HCT116 (cell line): ENCODE measurements at regions of chr22 and their contacts with region 1.

Region 1: DNA sequence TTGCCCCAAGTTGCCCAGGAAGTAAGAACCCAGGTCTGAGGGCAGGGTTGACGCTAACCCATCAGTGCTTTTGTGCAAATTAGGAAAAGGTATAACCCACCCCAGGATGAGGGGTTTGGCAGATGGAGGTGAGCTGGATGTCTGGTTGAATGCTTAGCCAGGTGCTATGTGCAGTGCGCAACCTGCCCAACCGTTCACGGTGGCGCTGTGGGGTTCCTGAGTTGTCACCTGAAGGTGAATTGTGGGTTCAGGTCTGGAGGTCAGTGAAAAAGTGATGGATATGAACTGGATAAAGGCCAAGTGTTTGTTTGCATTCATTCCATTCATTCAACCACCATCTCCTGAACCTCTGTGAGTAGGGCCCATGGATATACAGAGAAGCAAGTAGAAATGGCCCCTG is 14.3 kb upstream of the LGALS2 start:
- DNase-seq: no peak
- ATAC-seq: peak; percentile 70
- H3K4me3 ChIP-seq: no peak overlapping the region
- H3K27ac ChIP-seq: no peak overlapping the region
- H3K4me1 ChIP-seq: peaks cover 4 to 22% of the 10 kb centered on the region in 2 experiments; a peak in 3 of 4 replicates
- H3K27me3 ChIP-seq: no peaks in the 10 kb centered on the region
- CTCF ChIP-seq: peak; percentile 35 to 68 (median 63); a peak in 5 of 6 replicates
- POLR2A ChIP-seq: no peak
- RAD21 ChIP-seq: peak; percentile 34; the same call in 1 of the 2 replicates

Region 2: DNA sequence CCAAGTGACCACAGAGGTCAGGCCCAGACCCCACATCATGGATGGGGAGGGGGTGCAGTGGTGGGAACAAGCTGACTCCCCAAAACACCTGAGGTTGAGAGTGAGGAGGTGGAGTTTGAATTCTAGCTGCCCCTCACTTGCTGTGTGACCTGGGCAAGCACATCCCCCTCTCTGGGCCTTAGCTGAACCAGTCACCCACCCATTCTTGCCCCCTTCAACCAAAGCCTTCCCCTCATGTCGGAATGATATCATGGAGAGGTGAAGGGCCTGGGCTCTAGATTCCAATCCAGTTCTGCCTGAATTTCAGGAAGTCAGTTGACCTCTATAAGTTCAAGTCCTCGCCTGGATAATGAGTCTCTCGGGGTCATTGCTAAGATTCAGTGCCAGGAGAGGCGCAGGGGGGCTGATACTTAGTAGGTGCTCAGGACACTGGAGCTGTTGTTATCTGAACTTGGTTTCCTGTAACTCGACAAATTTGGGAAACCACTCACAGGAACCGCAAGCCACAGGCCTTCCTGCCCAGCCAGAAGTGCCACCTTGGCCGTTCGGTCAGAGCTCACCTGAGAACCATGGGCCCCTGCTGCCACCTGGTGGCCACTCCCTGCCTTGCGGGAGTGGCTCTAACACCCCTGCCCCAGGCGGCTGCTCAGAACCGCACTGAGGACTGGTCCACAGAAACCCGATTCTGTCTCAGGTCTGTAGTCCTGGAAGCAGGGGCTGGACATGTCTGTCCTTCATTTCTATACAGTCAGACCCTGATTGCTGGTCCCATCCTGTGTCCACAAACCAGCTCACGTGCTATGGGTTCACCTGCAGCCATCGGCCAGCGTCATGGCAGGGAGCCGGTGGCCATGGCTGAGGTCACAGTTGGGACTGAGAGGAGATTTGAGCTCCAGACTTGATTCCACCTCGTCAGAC is 27.1 kb before region 1 on chr22:
- CTCF ChIA-PET with region 1: interaction called, 18 read pairs
- POLR2A ChIA-PET with region 1: interaction called, 9 read pairs
- RAD21 ChIA-PET with region 1: interaction called in 1 of 2 experiments, 4 read pairs
- intact Hi-C with region 1: no loop called
- DNase-seq: peak; percentile 84
- ATAC-seq: peak; percentile 62
- H3K4me3 ChIP-seq: no peak overlapping the region
- H3K27ac ChIP-seq: peak overlapping the region; percentile 72
- H3K4me1 ChIP-seq: peaks cover 76 to 98% of the 10 kb centered on the region in 2 experiments
- H3K27me3 ChIP-seq: no peaks in the 10 kb centered on the region
- CTCF ChIP-seq: peak in 2 of 3 experiments; percentile 94 to 97; a peak in 4 of 6 replicates
- POLR2A ChIP-seq: no peak
- RAD21 ChIP-seq: no peak